Naive thymus-derived CD4-positive, alpha-beta T cell (primary cell): ENCODE measurements at regions of chr2 and their contacts with region 1.

Region 1: DNA sequence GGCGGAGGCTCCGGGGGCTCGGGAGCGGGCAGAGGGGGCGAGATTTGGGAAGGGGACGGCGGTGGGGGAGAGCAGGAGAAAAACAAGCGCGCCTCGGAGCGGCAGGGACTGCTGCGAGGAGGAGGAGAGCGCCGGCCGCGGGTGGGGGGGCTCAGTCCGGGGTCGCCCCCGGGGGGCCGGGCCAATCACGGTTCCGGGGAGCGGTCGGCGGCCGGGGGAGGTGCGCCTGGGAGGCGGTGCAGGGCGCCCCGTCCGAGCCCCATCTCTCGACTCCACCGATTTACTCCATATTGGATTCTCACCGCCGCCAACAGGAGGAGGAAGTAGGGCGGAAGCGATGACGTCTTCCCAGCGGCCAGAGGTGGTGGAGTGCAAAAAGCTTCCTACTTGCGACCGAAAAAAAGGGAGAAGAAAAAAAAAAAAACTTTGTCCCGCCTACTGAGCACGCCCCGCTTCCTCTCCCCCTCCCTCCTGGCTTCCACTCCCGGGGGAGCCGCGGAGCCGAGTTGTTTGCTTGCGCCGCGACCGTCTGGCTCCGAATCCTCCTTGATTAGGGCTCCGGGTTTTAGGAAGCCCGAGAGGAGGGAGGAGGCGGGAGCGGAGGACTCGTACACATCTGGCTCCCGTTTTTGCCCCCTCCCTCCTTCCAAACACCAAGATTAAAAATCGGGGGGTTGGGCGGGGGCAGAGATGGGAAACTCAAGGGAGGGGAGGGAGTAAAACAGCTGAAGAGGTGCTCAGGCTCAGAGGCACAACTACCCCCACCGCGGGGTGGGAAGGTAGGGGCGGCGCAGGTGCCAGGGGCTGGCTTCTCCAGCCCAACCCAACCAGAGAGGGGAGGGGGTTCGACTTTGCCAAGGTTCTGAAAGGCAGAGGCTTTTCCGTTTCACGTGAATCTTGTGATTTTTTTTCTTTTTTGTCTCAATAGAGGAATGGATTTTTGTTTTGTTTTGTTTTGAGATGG is at the start of gene SPRED2:
- DNase-seq: peak; percentile 36 to 75 (median 51)
- ATAC-seq: peak; percentile 58
- H3K4me3 ChIP-seq: peak within 1 kb of the TSS; percentile 75
- H3K4me3 Mint-ChIP-seq: peak within 1 kb of the TSS; percentile 89 to 95 (median 90)
- H3K27ac ChIP-seq: peak within 1 kb of the TSS; percentile 8
- H3K27ac Mint-ChIP-seq: peak within 1 kb of the TSS in 5 of 9 donors; percentile 31 to 90 (median 69)
- H3K4me1 ChIP-seq: peaks cover 8 to 11% of the 10 kb centered on the region in 2 donors
- H3K4me1 Mint-ChIP-seq: peaks cover 7 to 33% (median 16%) of the 10 kb centered on the region in 7 donors
- H3K27me3 ChIP-seq: peaks cover 0 to 22% of the 10 kb centered on the region in 2 donors
- H3K27me3 Mint-ChIP-seq: peaks cover 27 to 67% (median 36%) of the 10 kb centered on the region in 5 donors
- total RNA-seq, gene SPRED2: 0.34 to 7.9 (median 1.7) TPM

Region 2: DNA sequence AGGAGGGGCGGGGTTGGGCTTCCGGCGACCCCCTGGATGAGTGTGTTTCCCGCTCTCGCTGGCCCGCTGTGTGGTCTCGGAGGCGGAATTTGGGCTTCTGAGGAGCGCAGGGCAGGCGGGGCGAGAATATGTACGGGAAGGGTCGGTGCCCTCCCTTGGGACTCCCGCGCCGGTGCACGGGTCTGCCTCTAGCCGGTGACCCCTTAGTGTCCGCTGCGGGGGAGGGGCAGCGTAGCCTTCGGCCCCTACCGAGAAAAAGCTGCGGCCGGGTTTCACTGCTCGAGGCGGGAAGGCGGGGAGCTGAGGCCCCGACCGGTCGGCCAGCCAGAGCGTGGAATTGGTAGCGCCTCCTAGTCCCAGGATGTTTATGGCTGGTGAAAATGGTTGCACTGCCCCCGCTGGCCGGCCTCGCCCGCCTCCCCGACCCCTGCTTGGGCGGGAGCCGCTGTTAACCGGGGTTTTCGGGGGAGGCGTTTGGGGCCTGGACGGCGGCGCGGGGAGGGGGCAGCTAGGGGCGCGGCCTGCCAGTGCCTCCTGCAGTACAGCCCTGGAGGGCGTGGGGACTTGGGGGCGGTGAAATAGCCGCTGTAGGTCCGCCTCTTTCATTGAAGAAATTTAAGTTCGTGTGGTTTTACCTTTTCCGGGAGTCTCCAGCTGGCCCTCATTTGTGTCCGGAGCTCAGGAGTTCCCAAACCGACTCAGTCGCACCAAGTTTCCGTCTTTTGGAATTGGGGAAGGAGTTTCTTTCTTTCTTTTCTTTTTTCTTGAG is 1591.1 kb before region 1 on chr2 and contains the start of gene UGP2:
- CTCF ChIA-PET with region 1: no interaction called
- POLR2A ChIA-PET with region 1: no interaction called
- intact Hi-C with region 1: loop called (anchors 5 kb)
- DNase-seq: peak; percentile 68 to 89 (median 83)
- ATAC-seq: peak; percentile 77
- H3K4me3 ChIP-seq: peak within 1 kb of the TSS; percentile 82
- H3K4me3 Mint-ChIP-seq: peak within 1 kb of the TSS; percentile 97 to 100 (median 99)
- H3K27ac ChIP-seq: peak within 1 kb of the TSS; percentile 90
- H3K27ac Mint-ChIP-seq: peak within 1 kb of the TSS; percentile 95 to 99 (median 97)
- H3K4me1 ChIP-seq: peaks cover 5 to 24% of the 10 kb centered on the region in 2 donors
- H3K4me1 Mint-ChIP-seq: peaks cover 27 to 60% (median 53%) of the 10 kb centered on the region in 7 donors
- H3K27me3 ChIP-seq: no peaks in the 10 kb centered on the region
- H3K27me3 Mint-ChIP-seq: peaks cover 0 to 14% (median 0%) of the 10 kb centered on the region in 5 donors
- total RNA-seq, gene UGP2: 69.5 to 134 (median 92.4) TPM

Region 3: GRCh38 chr2:64767670-64768468 is 664.6 kb before region 1 on chr2:
- CTCF ChIA-PET with region 1: no interaction called
- POLR2A ChIA-PET with region 1: no interaction called
- intact Hi-C with region 1: loop called in 1 of 2 experiments (anchors 10 kb)
- DNase-seq: peak; percentile 35 to 78 (median 55)
- ATAC-seq: peak; percentile 89
- H3K4me3 ChIP-seq: peak overlapping the region; percentile 80
- H3K4me3 Mint-ChIP-seq: peak overlapping the region; percentile 90 to 99 (median 96)
- H3K27ac ChIP-seq: peak overlapping the region; percentile 73
- H3K27ac Mint-ChIP-seq: peak overlapping the region; percentile 92 to 97 (median 95)
- H3K4me1 ChIP-seq: peaks cover 3 to 12% of the 10 kb centered on the region in 2 donors
- H3K4me1 Mint-ChIP-seq: peaks cover 9 to 40% (median 23%) of the 10 kb centered on the region in 7 donors
- H3K27me3 ChIP-seq: no peaks in the 10 kb centered on the region
- H3K27me3 Mint-ChIP-seq: peaks cover 0 to 15% (median 0%) of the 10 kb centered on the region in 5 donors

Region 4: GRCh38 chr2:65056215-65057053 is 376.1 kb before region 1 on chr2 and contains the start of gene CEP68:
- CTCF ChIA-PET with region 1: no interaction called
- POLR2A ChIA-PET with region 1: no interaction called
- intact Hi-C with region 1: loop called (anchors 1 to 5 kb)
- DNase-seq: peak; percentile 88 to 96 (median 95)
- ATAC-seq: peak; percentile 96
- H3K4me3 ChIP-seq: peak within 1 kb of the TSS; percentile 54
- H3K4me3 Mint-ChIP-seq: peak within 1 kb of the TSS; percentile 79 to 99 (median 94)
- H3K27ac ChIP-seq: peak within 1 kb of the TSS; percentile 76
- H3K27ac Mint-ChIP-seq: peak within 1 kb of the TSS; percentile 84 to 97 (median 90)
- H3K4me1 ChIP-seq: peaks cover 10 to 42% of the 10 kb centered on the region in 2 donors
- H3K4me1 Mint-ChIP-seq: peaks cover 41 to 81% (median 61%) of the 10 kb centered on the region in 7 donors
- H3K27me3 ChIP-seq: no peaks in the 10 kb centered on the region
- H3K27me3 Mint-ChIP-seq: peaks cover 0 to 2% (median 0%) of the 10 kb centered on the region in 5 donors
- total RNA-seq, gene CEP68: 8.5 to 52.0 (median 20.8) TPM

Region 5: DNA sequence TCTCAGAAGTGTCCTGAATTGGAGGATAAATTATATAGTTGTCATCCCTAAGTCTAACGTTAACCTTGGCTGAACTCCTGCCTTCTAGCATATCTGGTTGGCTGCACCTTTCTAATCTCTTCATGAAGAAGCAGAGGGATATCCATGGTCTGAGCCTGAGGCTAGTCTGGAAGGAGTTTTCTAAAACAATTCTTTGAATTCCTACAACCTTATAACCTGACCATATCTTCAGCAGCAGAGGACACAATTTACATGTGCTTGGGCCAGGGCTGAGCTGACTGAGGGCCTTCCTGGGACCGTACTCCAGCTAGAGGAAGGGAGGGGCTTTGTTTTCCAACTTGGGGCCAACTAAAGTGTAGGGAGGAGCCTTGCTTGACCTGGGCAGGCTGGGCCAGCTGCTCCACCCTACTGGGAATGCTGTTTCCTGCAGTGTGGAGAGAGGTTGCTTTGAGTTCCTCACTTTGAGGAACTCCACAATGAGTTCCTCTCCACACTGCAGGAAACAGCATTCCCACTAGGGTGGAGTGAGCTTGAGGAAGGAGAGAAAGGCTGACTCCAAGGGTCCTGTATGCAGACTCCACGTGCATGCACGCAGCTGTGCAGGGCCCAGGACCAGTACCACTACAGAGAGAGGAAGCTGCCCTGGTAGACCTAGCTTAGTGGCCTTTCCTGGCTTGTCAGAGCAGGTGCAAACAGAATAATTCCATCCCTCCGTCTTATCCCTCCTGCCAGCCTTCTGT is 356.7 kb before region 1 on chr2:
- CTCF ChIA-PET with region 1: no interaction called
- POLR2A ChIA-PET with region 1: no interaction called
- intact Hi-C with region 1: no loop called
- DNase-seq: no peak
- ATAC-seq: no peak
- H3K4me3 ChIP-seq: no peak overlapping the region
- H3K4me3 Mint-ChIP-seq: no peak overlapping the region
- H3K27ac ChIP-seq: no peak overlapping the region
- H3K27ac Mint-ChIP-seq: peak overlapping the region in 7 of 9 donors; percentile 44 to 84 (median 50)
- H3K4me1 ChIP-seq: no peaks in the 10 kb centered on the region
- H3K4me1 Mint-ChIP-seq: peaks cover 0 to 5% (median 0%) of the 10 kb centered on the region in 7 donors
- H3K27me3 ChIP-seq: no peaks in the 10 kb centered on the region
- H3K27me3 Mint-ChIP-seq: no peaks in the 10 kb centered on the region

Region 6: GRCh38 chr2:65227425-65228262 is 204.9 kb before region 1 on chr2 and contains the start of gene ACTR2:
- CTCF ChIA-PET with region 1: no interaction called
- POLR2A ChIA-PET with region 1: interaction called, 3 read pairs
- intact Hi-C with region 1: loop called (anchors 1 kb)
- DNase-seq: peak; percentile 86 to 94 (median 93)
- ATAC-seq: peak; percentile 97
- H3K4me3 ChIP-seq: peak within 1 kb of the TSS; percentile 99
- H3K4me3 Mint-ChIP-seq: peak within 1 kb of the TSS; percentile 95 to 100 (median 98)
- H3K27ac ChIP-seq: peak within 1 kb of the TSS; percentile 97
- H3K27ac Mint-ChIP-seq: peak within 1 kb of the TSS; percentile 97 to 99 (median 98)
- H3K4me1 ChIP-seq: peaks cover 25 to 38% of the 10 kb centered on the region in 2 donors
- H3K4me1 Mint-ChIP-seq: peaks cover 24 to 54% (median 44%) of the 10 kb centered on the region in 7 donors
- H3K27me3 ChIP-seq: no peaks in the 10 kb centered on the region
- H3K27me3 Mint-ChIP-seq: no peaks in the 10 kb centered on the region
- total RNA-seq, gene ACTR2: 180 to 435 (median 287) TPM

Region 7: DNA sequence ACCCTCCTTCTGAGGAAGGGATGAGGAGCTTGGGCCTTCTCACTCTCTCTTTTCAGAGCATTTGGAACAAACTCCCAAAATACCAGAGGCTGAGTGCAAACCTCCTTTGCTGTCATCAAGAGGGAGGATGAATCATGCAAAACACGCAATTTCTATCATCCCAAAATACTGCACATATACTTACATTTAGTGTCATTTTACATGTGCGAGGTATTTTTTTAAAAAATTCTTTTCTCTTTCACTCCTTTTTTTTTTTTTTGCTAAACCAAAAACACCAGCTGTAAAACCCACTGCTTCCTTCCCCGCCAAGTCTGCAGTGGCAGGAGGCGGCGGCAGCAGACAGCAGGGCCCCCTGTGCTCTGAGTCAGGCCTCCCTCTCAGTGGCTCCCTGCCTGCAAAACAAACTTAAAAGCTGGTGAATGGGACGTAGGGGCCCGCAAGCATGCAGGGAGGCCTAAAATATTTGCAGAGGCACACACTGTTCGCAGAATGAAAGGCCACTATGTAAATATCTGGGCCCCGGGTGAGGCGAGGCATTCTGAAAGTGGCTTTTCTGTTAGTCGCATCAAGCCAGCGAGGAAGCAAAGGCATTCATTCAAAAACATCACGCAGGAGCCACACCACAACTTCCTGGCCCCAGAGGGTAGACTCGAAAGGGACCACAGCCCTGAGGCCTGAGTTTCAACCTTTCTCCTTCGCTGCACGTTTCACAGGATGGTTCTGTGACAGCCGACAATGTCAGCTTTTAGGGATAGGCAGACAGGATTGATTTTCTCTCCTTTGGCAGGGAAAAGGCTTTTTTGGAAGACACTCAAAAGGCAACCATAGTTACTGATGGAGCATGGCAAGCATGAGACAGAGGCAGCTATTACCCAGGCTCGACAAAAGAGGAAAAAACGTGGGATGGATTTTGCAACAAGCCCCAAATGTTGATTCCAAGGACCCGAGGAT is 131.5 kb before region 1 on chr2:
- CTCF ChIA-PET with region 1: no interaction called
- POLR2A ChIA-PET with region 1: no interaction called
- intact Hi-C with region 1: loop called (anchors 1 kb)
- DNase-seq: peak; percentile 31 to 85 (median 81)
- ATAC-seq: peak; percentile 89
- H3K4me3 ChIP-seq: peak overlapping the region; percentile 53
- H3K4me3 Mint-ChIP-seq: peak overlapping the region; percentile 70 to 95 (median 86)
- H3K27ac ChIP-seq: peak overlapping the region; percentile 24
- H3K27ac Mint-ChIP-seq: peak overlapping the region; percentile 88 to 96 (median 94)
- H3K4me1 ChIP-seq: peaks cover 21 to 29% of the 10 kb centered on the region in 2 donors
- H3K4me1 Mint-ChIP-seq: peaks cover 24 to 57% (median 38%) of the 10 kb centered on the region in 7 donors
- H3K27me3 ChIP-seq: no peaks in the 10 kb centered on the region
- H3K27me3 Mint-ChIP-seq: peaks cover 0 to 41% (median 0%) of the 10 kb centered on the region in 5 donors

Region 8: DNA sequence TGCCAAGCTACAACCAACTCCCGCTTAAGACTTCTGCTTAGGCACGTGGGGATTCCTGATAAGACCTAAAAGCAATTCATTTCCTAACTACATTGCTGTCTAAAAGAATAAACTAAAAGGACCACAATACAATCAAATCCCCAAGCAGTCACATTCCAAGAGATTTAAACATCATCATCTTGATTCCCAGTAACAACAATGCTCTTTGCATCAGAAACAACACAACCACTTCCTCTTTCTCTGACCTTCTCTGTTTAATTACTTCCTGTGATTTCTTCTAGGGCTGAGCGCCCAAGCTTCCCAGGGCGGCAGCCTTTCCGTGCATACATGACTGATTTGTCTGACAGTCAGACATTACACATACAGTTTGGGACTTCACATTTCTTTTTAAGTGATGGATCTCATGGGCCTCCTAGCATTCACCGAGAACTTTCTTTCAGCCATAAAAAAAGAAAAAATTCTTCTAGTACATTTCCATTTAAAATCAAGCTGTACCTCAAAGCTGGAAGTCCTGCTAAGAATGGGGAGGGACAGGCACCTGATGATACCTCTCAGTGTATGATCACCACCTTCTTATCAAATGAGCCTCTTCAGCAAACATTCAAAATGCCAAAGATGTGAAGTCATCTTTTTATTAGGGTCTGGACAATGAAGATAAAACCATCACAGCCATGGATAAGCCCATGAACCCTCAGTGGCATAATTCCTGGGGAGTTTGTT is 11.6 kb before region 1 on chr2:
- CTCF ChIA-PET with region 1: no interaction called
- POLR2A ChIA-PET with region 1: interaction called, 6 read pairs
- intact Hi-C with region 1: loop called in 1 of 2 experiments (anchors 1 kb)
- DNase-seq: no peak
- ATAC-seq: peak; percentile 84
- H3K4me3 ChIP-seq: no peak overlapping the region
- H3K4me3 Mint-ChIP-seq: peak overlapping the region in 9 of 10 donors; percentile 1 to 77 (median 36)
- H3K27ac ChIP-seq: no peak overlapping the region
- H3K27ac Mint-ChIP-seq: peak overlapping the region in 1 of 9 donors; percentile 77
- H3K4me1 ChIP-seq: peaks cover 0 to 5% of the 10 kb centered on the region in 2 donors
- H3K4me1 Mint-ChIP-seq: peaks cover 13 to 33% (median 33%) of the 10 kb centered on the region in 7 donors
- H3K27me3 ChIP-seq: no peaks in the 10 kb centered on the region
- H3K27me3 Mint-ChIP-seq: peaks cover 0 to 4% (median 0%) of the 10 kb centered on the region in 5 donors

Region 9: GRCh38 chr2:65658881-65659280 is 226.4 kb after region 1 on chr2:
- CTCF ChIA-PET with region 1: no interaction called
- POLR2A ChIA-PET with region 1: no interaction called
- intact Hi-C with region 1: no loop called
- DNase-seq: no peak
- ATAC-seq: no peak
- H3K4me3 ChIP-seq: no peak overlapping the region
- H3K4me3 Mint-ChIP-seq: no peak overlapping the region
- H3K27ac ChIP-seq: no peak overlapping the region
- H3K27ac Mint-ChIP-seq: no peak overlapping the region
- H3K4me1 ChIP-seq: no peaks in the 10 kb centered on the region
- H3K4me1 Mint-ChIP-seq: no peaks in the 10 kb centered on the region
- H3K27me3 ChIP-seq: no peaks in the 10 kb centered on the region
- H3K27me3 Mint-ChIP-seq: peaks cover 8 to 25% (median 22%) of the 10 kb centered on the region in 5 donors